ENCODE measurements at regions of chr5 and their contacts with region 1.

Region 1: GRCh38 chr5:78008356-78008967 is 232.3 kb upstream of the TBCA start:
- DNase-seq: peak; percentile 43
- ATAC-seq: peak; percentile 84
- H3K4me3 ChIP-seq: no peak overlapping the region
- H3K27ac ChIP-seq: no peak overlapping the region
- H3K4me1 ChIP-seq: no peaks in the 10 kb centered on the region
- H3K27me3 ChIP-seq: no peaks in the 10 kb centered on the region
- CTCF ChIP-seq: peak; percentile 88

Region 2: GRCh38 chr5:77518304-77518703 is 490.2 kb before region 1 on chr5:
- CTCF ChIA-PET with region 1: no interaction called
- POLR2A ChIA-PET with region 1: no interaction called
- in situ Hi-C with region 1: no loop called
- intact Hi-C with region 1: loop called (anchors 5 kb)
- DNase-seq: no peak
- ATAC-seq: no peak
- H3K4me3 ChIP-seq: no peak overlapping the region
- H3K27ac ChIP-seq: no peak overlapping the region
- H3K4me1 ChIP-seq: no peaks in the 10 kb centered on the region
- H3K27me3 ChIP-seq: peaks cover 7% of the 10 kb centered on the region; the same call in 1 of the 2 replicates
- CTCF ChIP-seq: peak; percentile 50; the same call in 1 of the 2 replicates

Region 3: GRCh38 chr5:77560677-77561263 is 447.7 kb before region 1 on chr5:
- CTCF ChIA-PET with region 1: no interaction called
- POLR2A ChIA-PET with region 1: no interaction called
- in situ Hi-C with region 1: no loop called
- intact Hi-C with region 1: loop called (anchors 5 kb)
- DNase-seq: peak; percentile 38
- ATAC-seq: 0 out of 2 replicates have a peak, but pooled peaks have one; percentile 63
- H3K4me3 ChIP-seq: no peak overlapping the region
- H3K27ac ChIP-seq: no peak overlapping the region
- H3K4me1 ChIP-seq: no peaks in the 10 kb centered on the region
- H3K27me3 ChIP-seq: peaks cover 10% of the 10 kb centered on the region; the same call in 1 of the 2 replicates
- CTCF ChIP-seq: peak; percentile 65; the same call in 1 of the 2 replicates

Region 4: GRCh38 chr5:77867194-77867691 is 141.2 kb before region 1 on chr5:
- CTCF ChIA-PET with region 1: no interaction called
- POLR2A ChIA-PET with region 1: no interaction called
- in situ Hi-C with region 1: no loop called
- intact Hi-C with region 1: loop called (anchors 5 kb)
- DNase-seq: no peak
- ATAC-seq: no peak
- H3K4me3 ChIP-seq: no peak overlapping the region
- H3K27ac ChIP-seq: no peak overlapping the region
- H3K4me1 ChIP-seq: no peaks in the 10 kb centered on the region
- H3K27me3 ChIP-seq: peaks cover 5% of the 10 kb centered on the region; the same call in 1 of the 2 replicates
- CTCF ChIP-seq: peak; percentile 17; the same call in 1 of the 2 replicates

Region 5: DNA sequence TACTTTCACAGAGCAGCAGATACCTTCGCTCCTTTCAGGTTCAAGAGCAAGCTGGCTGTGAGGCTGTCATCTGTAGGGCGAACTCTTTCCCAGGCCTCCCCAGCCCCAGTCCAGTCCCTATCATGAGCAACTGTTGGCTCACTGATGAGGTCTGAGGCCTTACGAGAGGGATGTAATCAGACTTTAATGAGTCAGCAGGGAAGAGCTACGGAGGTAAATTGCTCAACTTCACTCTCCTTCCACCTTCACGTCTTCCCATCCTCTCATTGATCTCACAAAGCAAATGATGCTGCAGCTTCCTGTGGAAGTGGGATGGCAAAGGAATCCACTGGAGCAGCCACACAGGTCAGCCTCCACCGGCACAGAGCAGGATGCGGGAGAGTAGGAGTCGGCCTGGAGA is 101.7 kb before region 1 on chr5:
- CTCF ChIA-PET with region 1: no interaction called
- POLR2A ChIA-PET with region 1: no interaction called
- in situ Hi-C with region 1: no loop called
- intact Hi-C with region 1: no loop called
- DNase-seq: no peak
- ATAC-seq: no peak
- H3K4me3 ChIP-seq: no peak overlapping the region
- H3K27ac ChIP-seq: no peak overlapping the region
- H3K4me1 ChIP-seq: no peaks in the 10 kb centered on the region
- H3K27me3 ChIP-seq: no peaks in the 10 kb centered on the region
- CTCF ChIP-seq: no peak